PC-3 (cell line): ENCODE measurements at regions of chr3 and their contacts with region 1.

Region 1: GRCh38 chr3:176430244-176431037 is 766.8 kb downstream of the TBL1XR1 start:
- DNase-seq: peak; percentile 72
- ATAC-seq: peak; percentile 57
- H3K4me3 ChIP-seq: no peak overlapping the region
- H3K27ac ChIP-seq: no peak overlapping the region
- H3K4me1 ChIP-seq: no peaks in the 10 kb centered on the region
- H3K27me3 ChIP-seq: no peaks in the 10 kb centered on the region
- CTCF ChIP-seq: peak; percentile 87

Region 2: DNA sequence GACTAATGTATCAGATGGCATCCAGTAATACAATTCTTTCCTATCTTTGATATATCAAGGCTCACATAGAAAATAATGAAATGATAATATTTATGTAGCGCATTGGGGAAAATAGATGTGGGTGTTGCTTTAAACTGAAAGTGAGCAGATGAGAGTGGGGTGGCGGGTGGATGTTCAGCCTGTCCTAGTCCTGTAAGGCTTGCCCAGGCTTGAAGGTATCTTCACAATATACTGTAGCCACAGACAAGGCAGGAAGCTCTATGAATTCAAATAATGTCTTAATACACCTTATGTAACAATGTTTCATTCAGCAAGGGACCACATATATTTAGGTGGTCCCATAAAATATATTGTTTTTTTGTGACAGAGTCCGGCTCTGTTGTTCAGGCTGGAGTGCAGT is 1906.2 kb before region 1 on chr3:
- CTCF ChIA-PET with region 1: no interaction called
- POLR2A ChIA-PET with region 1: no interaction called
- intact Hi-C with region 1: loop called (anchors 10 kb)
- DNase-seq: no peak
- ATAC-seq: no peak
- H3K4me3 ChIP-seq: no peak overlapping the region
- H3K27ac ChIP-seq: no peak overlapping the region
- H3K4me1 ChIP-seq: no peaks in the 10 kb centered on the region
- H3K27me3 ChIP-seq: no peaks in the 10 kb centered on the region
- CTCF ChIP-seq: no peak

Region 3: GRCh38 chr3:174862143-174862542 is 1568.3 kb before region 1 on chr3:
- CTCF ChIA-PET with region 1: no interaction called
- POLR2A ChIA-PET with region 1: no interaction called
- intact Hi-C with region 1: loop called (anchors 10 kb)
- DNase-seq: peak; percentile 85
- ATAC-seq: peak; percentile 69
- H3K4me3 ChIP-seq: no peak overlapping the region
- H3K27ac ChIP-seq: peak overlapping the region; percentile 59; the same call in 1 of the 2 replicates
- H3K4me1 ChIP-seq: peaks cover 50% of the 10 kb centered on the region
- H3K27me3 ChIP-seq: no peaks in the 10 kb centered on the region
- CTCF ChIP-seq: peak; percentile 87

Region 4: GRCh38 chr3:175410251-175410650 is 1020.2 kb before region 1 on chr3:
- CTCF ChIA-PET with region 1: no interaction called
- POLR2A ChIA-PET with region 1: no interaction called
- intact Hi-C with region 1: loop called (anchors 10 kb)
- DNase-seq: peak; percentile 20
- ATAC-seq: peak; percentile 11; the same call in 1 of the 2 replicates
- H3K4me3 ChIP-seq: no peak overlapping the region
- H3K27ac ChIP-seq: no peak overlapping the region
- H3K4me1 ChIP-seq: peaks cover 23% of the 10 kb centered on the region
- H3K27me3 ChIP-seq: no peaks in the 10 kb centered on the region
- CTCF ChIP-seq: no peak

Region 5: GRCh38 chr3:175606650-175607318 is 823.7 kb before region 1 on chr3:
- CTCF ChIA-PET with region 1: no interaction called
- POLR2A ChIA-PET with region 1: no interaction called
- intact Hi-C with region 1: loop called (anchors 10 kb)
- DNase-seq: peak; percentile 60
- ATAC-seq: peak; percentile 74
- H3K4me3 ChIP-seq: no peak overlapping the region
- H3K27ac ChIP-seq: no peak overlapping the region
- H3K4me1 ChIP-seq: peaks cover 11% of the 10 kb centered on the region
- H3K27me3 ChIP-seq: no peaks in the 10 kb centered on the region
- CTCF ChIP-seq: no peak

Region 6: GRCh38 chr3:175957002-175957401 is 473.4 kb before region 1 on chr3:
- CTCF ChIA-PET with region 1: interaction called, 3 read pairs
- POLR2A ChIA-PET with region 1: no interaction called
- intact Hi-C with region 1: loop called (anchors 1 kb)
- DNase-seq: peak; percentile 62
- ATAC-seq: peak; percentile 40; the same call in 1 of the 2 replicates
- H3K4me3 ChIP-seq: no peak overlapping the region
- H3K27ac ChIP-seq: no peak overlapping the region
- H3K4me1 ChIP-seq: no peaks in the 10 kb centered on the region
- H3K27me3 ChIP-seq: no peaks in the 10 kb centered on the region
- CTCF ChIP-seq: peak; percentile 74

Region 7: DNA sequence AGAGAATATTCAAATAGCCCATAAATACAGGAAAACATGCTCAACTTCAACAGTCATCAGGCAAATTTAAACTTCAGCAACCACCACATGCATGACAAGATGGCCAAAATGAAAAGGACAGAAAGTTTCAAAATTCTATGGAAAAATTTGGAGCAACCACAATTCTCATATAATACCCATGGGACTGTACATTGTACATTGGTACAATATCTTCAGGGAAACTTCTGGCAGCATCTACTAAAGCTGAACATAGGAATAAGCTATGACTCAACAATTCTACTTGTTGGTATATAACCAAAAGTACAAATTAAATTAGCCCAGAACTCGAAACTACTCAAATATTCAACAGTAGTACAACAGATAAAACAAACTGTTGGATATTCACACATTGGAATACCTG is 80.7 kb before region 1 on chr3:
- CTCF ChIA-PET with region 1: no interaction called
- POLR2A ChIA-PET with region 1: no interaction called
- intact Hi-C with region 1: no loop called
- DNase-seq: no peak
- ATAC-seq: no peak
- H3K4me3 ChIP-seq: no peak overlapping the region
- H3K27ac ChIP-seq: no peak overlapping the region
- H3K4me1 ChIP-seq: no peaks in the 10 kb centered on the region
- H3K27me3 ChIP-seq: no peaks in the 10 kb centered on the region
- CTCF ChIP-seq: no peak

Region 8: GRCh38 chr3:176663837-176664831 is 233.7 kb after region 1 on chr3:
- CTCF ChIA-PET with region 1: no interaction called
- POLR2A ChIA-PET with region 1: no interaction called
- intact Hi-C with region 1: loop called (anchors 5 kb)
- DNase-seq: peak; percentile 74
- ATAC-seq: peak; percentile 97
- H3K4me3 ChIP-seq: no peak overlapping the region
- H3K27ac ChIP-seq: no peak overlapping the region
- H3K4me1 ChIP-seq: 0 out of 2 replicates have a peak, but pooled peaks cover 5% of the 10 kb centered on the region
- H3K27me3 ChIP-seq: no peaks in the 10 kb centered on the region
- CTCF ChIP-seq: peak; percentile 73

Region 9: GRCh38 chr3:176879710-176880109 is 449.3 kb after region 1 on chr3:
- CTCF ChIA-PET with region 1: no interaction called
- POLR2A ChIA-PET with region 1: no interaction called
- intact Hi-C with region 1: no loop called
- DNase-seq: no peak
- ATAC-seq: no peak
- H3K4me3 ChIP-seq: no peak overlapping the region
- H3K27ac ChIP-seq: no peak overlapping the region
- H3K4me1 ChIP-seq: no peaks in the 10 kb centered on the region
- H3K27me3 ChIP-seq: no peaks in the 10 kb centered on the region
- CTCF ChIP-seq: no peak